ENCODE measurements at regions of chr2 and their contacts with region 1.

Region 1: DNA sequence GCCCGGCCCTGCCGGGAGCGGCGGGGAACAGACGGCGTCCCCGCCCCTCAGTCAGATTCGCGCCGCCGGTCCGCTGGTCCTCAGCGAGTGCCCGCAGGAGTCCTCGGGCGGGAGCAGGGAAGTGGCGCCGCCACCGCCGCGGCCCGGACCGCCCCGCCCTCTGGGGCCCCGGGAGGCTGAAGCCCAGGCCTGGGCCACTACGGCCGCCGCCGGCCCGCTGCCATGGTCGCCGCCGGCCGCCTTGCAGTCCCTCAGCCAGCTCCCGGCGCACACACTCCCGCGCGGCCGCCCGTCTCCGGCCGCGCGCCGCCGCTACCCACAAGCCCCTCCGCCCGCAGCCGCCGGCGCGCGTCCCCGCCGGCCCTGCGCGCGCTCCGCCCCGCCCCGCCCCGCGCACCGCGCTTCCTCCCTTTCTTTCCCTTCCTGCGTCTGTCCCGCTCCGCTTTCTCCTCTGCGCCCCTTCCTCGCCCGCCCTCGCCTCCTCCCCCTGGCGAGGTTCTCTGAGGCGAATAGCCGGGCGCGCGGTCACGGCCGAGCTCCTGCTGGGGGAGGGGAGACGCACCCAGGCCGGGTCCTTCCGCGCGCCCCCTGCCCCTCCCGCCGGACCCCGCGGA is at the start of gene ROCK2:
- DNase-seq: peak; percentile 77 to 85
- ATAC-seq: peak; percentile 70 to 76
- H3K4me3 ChIP-seq: peak within 1 kb of the TSS; percentile 89 to 93 (median 90)
- H3K27ac ChIP-seq: peak within 1 kb of the TSS; percentile 97 to 99 (median 98)
- H3K4me1 ChIP-seq: peaks cover 40% of the 10 kb centered on the region in 2 donors
- H3K27me3 ChIP-seq: no peaks in the 10 kb centered on the region
- CTCF ChIP-seq: peak in 1 of 5 experiments; percentile 6
- POLR2A ChIP-seq: peak; percentile 91 to 94
- total RNA-seq, gene ROCK2: 42.0 to 85.4 (median 70.7) TPM

Region 2: DNA sequence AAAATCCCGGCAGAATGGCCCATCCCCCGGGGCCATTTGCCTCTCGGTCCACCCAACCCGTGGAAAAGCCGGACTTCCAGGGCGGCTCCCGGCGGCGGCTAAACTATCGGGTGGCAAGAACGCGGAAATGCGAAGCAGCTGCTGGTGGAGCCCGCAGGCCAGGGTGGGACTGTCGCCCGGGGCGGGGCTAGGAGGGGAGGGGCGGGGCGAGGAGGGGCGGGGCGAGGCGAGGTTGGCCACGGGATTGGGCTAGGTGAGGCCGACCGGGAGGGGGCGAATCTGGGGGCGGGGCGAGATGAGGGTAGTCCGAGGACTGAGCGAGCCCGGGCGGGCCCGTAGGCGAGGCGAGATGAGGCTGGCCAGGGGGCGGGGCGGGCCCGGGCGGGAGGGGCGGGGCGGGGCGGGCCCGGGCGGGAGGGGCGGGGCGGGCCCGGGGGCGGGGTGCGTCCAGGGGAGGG is 189.5 kb before region 1 on chr2:
- in situ Hi-C with region 1: no loop called
- intact Hi-C with region 1: loop called (anchors 1 kb)
- DNase-seq: peak; percentile 97 to 99
- ATAC-seq: peak; percentile 73 to 81
- H3K4me3 ChIP-seq: peak overlapping the region; percentile 54 to 82 (median 74)
- H3K27ac ChIP-seq: peak overlapping the region; percentile 87 to 96 (median 91)
- H3K4me1 ChIP-seq: peaks cover 3 to 5% of the 10 kb centered on the region in 2 donors
- H3K27me3 ChIP-seq: no peaks in the 10 kb centered on the region
- CTCF ChIP-seq: no peak
- POLR2A ChIP-seq: no peak

Region 3: GRCh38 chr2:11239666-11240462 is 104.6 kb before region 1 on chr2:
- in situ Hi-C with region 1: no loop called
- intact Hi-C with region 1: loop called (anchors 5 kb)
- DNase-seq: no peak
- ATAC-seq: no peak
- H3K4me3 ChIP-seq: no peak overlapping the region
- H3K27ac ChIP-seq: peak overlapping the region; percentile 19 to 32 (median 26)
- H3K4me1 ChIP-seq: peaks cover 15 to 19% of the 10 kb centered on the region in 2 donors
- H3K27me3 ChIP-seq: no peaks in the 10 kb centered on the region
- CTCF ChIP-seq: no peak
- POLR2A ChIP-seq: no peak

Region 4: GRCh38 chr2:11370377-11371091 is 26.1 kb after region 1 on chr2:
- in situ Hi-C with region 1: no loop called
- intact Hi-C with region 1: loop called (anchors 2 kb)
- DNase-seq: no peak
- ATAC-seq: no peak
- H3K4me3 ChIP-seq: no peak overlapping the region
- H3K27ac ChIP-seq: peak overlapping the region; percentile 81 to 87 (median 84)
- H3K4me1 ChIP-seq: peaks cover 66 to 71% of the 10 kb centered on the region in 2 donors
- H3K27me3 ChIP-seq: no peaks in the 10 kb centered on the region
- CTCF ChIP-seq: no peak
- POLR2A ChIP-seq: no peak